Cardiac septum (tissue), 1 donor: ENCODE measurements at regions of chr5 and their contacts with region 1.

Region 1: DNA sequence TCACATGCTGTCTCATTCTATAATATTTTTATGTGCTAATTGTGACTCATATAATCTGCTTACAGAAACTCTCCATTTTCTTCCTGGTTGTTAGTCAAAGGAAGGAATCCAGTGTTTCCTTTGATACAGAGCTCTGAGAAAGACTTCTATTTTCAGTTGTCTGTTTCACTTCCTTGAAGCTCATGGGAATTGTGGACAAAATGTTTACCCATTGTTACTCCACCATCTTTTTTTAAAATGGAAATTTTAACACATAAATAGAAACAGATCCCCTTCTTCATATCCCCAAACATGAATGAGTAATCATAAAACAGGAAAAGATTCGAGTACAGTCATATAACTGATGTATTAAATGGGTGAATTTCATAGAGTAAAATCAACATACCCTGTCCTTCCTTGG is 42.0 kb upstream of the KCNN2 start:
- DNase-seq: no peak

Region 2: GRCh38 chr5:114185274-114185673 is 134.5 kb before region 1 on chr5:
- intact Hi-C with region 1: loop called (anchors 5 kb)
- DNase-seq: peak; percentile 85